ENCODE measurements at regions of chr11 and their contacts with region 1.

Region 1: DNA sequence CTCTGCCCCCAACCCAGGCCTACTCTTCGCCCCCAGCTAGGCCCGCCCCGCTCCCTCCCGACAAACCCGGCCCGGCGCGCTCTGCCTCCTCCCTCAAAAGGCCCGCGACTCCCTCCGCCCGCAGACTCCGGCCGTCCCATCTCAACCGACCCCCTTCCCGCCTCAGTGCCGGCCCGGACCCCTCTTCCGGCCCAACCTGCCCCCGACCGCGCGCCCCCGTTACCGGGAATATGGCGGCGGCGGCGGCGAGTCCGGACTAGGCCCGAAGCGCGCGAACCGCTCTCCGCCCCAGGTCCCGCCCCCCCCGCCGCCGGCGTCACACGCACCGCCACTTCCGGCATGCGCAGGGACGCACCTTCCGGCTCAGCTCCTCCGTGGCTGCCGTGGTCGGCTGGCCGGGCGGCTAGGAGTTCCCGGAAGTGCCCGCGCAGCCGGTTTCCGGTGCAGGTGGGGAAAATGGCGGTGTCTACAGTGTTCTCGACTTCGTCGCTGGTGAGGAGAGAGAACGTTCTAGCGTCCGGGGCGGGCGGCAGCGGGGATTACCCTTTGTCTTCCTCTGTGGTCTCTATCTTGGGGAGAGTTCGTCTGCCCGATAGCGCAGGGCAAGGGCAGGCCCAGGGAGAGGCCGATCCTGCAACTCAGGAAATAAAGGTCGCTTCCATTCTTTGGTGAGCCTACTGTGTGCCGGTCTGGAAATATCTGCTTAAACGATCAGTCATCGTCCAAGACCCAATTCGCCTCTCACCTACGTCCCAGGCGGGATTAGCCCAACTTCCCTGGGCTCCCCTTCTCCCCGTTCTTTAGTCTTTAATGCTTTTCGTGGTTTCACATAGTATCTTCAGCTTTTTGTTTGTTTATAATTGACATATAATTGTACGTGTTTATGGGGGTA is at the starts of genes CPSF7 and SDHAF2:
- DNase-seq: peak; percentile 97 to 98 (median 97)
- H3K4me3 ChIP-seq: peak within 1 kb of the TSS; percentile 93
- H3K4me3 Mint-ChIP-seq: peak within 1 kb of the TSS; percentile 91 to 100 (median 97)
- H3K27ac ChIP-seq: peak within 1 kb of the TSS; percentile 97
- H3K27ac Mint-ChIP-seq: peak within 1 kb of the TSS; percentile 97 to 100 (median 99)
- H3K4me1 ChIP-seq: peaks cover 52% of the 10 kb centered on the region
- H3K4me1 Mint-ChIP-seq: peaks cover 58 to 81% (median 77%) of the 10 kb centered on the region in 3 donors
- H3K27me3 ChIP-seq: no peaks in the 10 kb centered on the region
- H3K27me3 Mint-ChIP-seq: peaks cover 0 to 7% of the 10 kb centered on the region in 2 donors
- total RNA-seq, gene CPSF7: 128 to 140 TPM
- total RNA-seq, gene SDHAF2: 48.8 to 49.2 TPM

Region 2: GRCh38 chr11:61266602-61267001 is 163.3 kb before region 1 on chr11:
- CTCF ChIA-PET with region 1: no interaction called
- POLR2A ChIA-PET with region 1: no interaction called
- DNase-seq: no peak
- H3K4me3 ChIP-seq: no peak overlapping the region
- H3K4me3 Mint-ChIP-seq: no peak overlapping the region
- H3K27ac ChIP-seq: no peak overlapping the region
- H3K27ac Mint-ChIP-seq: no peak overlapping the region
- H3K4me1 ChIP-seq: no peaks in the 10 kb centered on the region
- H3K4me1 Mint-ChIP-seq: no peaks in the 10 kb centered on the region
- H3K27me3 ChIP-seq: no peaks in the 10 kb centered on the region
- H3K27me3 Mint-ChIP-seq: no peaks in the 10 kb centered on the region

Region 3: DNA sequence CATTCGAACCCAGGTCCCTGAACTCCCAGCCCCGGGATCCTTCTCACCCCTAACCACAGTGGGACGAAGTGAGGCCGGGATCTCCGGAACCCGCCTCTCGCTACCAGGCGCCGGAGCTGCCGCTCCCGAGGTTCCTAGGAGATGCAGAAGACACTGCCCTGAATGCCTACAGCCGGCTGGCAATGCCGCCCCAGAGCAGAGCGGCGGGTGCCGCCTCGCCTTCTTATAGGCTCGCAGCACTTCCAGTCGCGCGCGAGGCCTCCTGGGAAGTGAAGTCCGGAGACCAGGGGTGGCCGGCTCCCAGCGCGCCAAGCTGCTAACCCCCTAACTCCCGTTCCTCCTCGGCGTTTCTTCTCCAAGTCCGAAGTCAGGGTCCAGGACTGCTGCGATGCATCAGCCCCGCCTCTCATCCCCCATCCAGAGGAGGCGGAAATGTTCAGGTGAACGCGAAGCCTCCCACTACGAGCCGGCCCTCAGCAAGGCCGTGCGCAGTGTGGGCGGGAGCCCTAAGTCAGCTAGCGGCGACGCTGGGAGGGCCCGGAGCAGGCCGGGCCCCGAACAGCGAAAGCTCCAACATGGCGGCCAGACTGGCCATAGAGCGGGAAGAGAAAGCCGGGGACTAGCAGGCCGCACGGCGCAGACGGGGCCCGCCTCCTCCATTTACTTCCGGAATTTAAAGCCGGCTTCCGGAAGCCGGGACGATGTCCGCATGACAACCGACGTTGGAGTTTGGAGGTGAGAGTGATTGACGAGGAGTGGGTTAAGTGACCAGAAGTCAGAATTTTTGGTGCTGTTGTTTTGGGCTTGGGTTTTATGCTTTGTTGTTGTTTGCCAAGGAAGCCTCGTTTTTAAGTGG is 68.0 kb before region 1 on chr11 and contains the starts of genes CYB561A3 and TMEM138:
- CTCF ChIA-PET with region 1: interaction called, 4 read pairs
- POLR2A ChIA-PET with region 1: interaction called, 27 read pairs
- DNase-seq: peak; percentile 79 to 92 (median 84)
- H3K4me3 ChIP-seq: peak within 1 kb of the TSS; percentile 91
- H3K4me3 Mint-ChIP-seq: peak within 1 kb of the TSS; percentile 95 to 99 (median 96)
- H3K27ac ChIP-seq: peak within 1 kb of the TSS; percentile 88
- H3K27ac Mint-ChIP-seq: peak within 1 kb of the TSS; percentile 91 to 100 (median 98)
- H3K4me1 ChIP-seq: peaks cover 29% of the 10 kb centered on the region
- H3K4me1 Mint-ChIP-seq: peaks cover 29 to 44% (median 39%) of the 10 kb centered on the region in 3 donors
- H3K27me3 ChIP-seq: no peaks in the 10 kb centered on the region
- H3K27me3 Mint-ChIP-seq: no peaks in the 10 kb centered on the region
- total RNA-seq, gene CYB561A3: 53.0 to 53.7 TPM
- total RNA-seq, gene TMEM138: 74.4 to 75.1 TPM

Region 4: GRCh38 chr11:61392981-61393595 is 36.8 kb before region 1 on chr11:
- CTCF ChIA-PET with region 1: interaction called, 12 read pairs
- POLR2A ChIA-PET with region 1: interaction called, 20 read pairs
- DNase-seq: peak in 1 of 5 donors; percentile 41
- H3K4me3 ChIP-seq: peak overlapping the region; percentile 76
- H3K4me3 Mint-ChIP-seq: peak overlapping the region; percentile 91 to 97 (median 95)
- H3K27ac ChIP-seq: peak overlapping the region; percentile 67
- H3K27ac Mint-ChIP-seq: peak overlapping the region; percentile 92 to 100 (median 98)
- H3K4me1 ChIP-seq: peaks cover 21% of the 10 kb centered on the region
- H3K4me1 Mint-ChIP-seq: peaks cover 19 to 30% (median 23%) of the 10 kb centered on the region in 3 donors
- H3K27me3 ChIP-seq: no peaks in the 10 kb centered on the region
- H3K27me3 Mint-ChIP-seq: no peaks in the 10 kb centered on the region

Region 5: GRCh38 chr11:61446211-61446651 is 16.3 kb after region 1 on chr11:
- CTCF ChIA-PET with region 1: interaction called, 13 read pairs
- POLR2A ChIA-PET with region 1: no interaction called
- DNase-seq: peak; percentile 20 to 62 (median 33)
- H3K4me3 ChIP-seq: no peak overlapping the region
- H3K4me3 Mint-ChIP-seq: no peak overlapping the region
- H3K27ac ChIP-seq: no peak overlapping the region
- H3K27ac Mint-ChIP-seq: peak overlapping the region in 2 of 8 donors; percentile 47 to 81
- H3K4me1 ChIP-seq: no peaks in the 10 kb centered on the region
- H3K4me1 Mint-ChIP-seq: peaks cover 24 to 25% (median 25%) of the 10 kb centered on the region in 3 donors
- H3K27me3 ChIP-seq: no peaks in the 10 kb centered on the region
- H3K27me3 Mint-ChIP-seq: no peaks in the 10 kb centered on the region

Region 6: DNA sequence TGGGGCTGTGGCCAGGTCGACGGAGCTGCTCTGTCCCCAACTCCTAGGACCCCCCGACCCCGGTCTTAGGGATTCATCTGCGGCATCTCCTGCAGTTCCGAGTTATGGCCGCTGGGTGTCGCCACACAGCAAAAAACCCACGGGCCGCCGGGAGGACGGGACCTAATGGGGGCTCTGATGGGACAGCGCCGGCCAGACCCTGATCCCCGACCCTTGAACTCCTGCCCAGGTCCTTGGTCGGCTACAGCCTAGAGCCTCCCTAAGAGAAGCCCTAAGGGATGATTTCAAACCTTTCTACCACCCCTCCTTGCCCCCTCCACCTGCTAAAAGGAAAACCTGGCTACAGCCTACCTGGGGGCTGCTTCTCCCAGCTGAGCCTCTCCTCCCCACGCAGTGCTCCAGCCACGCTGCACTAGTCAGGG is 47.8 kb after region 1 on chr11:
- CTCF ChIA-PET with region 1: no interaction called
- POLR2A ChIA-PET with region 1: no interaction called
- DNase-seq: peak; percentile 19 to 65 (median 42)
- H3K4me3 ChIP-seq: no peak overlapping the region
- H3K4me3 Mint-ChIP-seq: peak overlapping the region in 1 of 7 donors; percentile 40
- H3K27ac ChIP-seq: no peak overlapping the region
- H3K27ac Mint-ChIP-seq: no peak overlapping the region
- H3K4me1 ChIP-seq: peaks cover 8% of the 10 kb centered on the region
- H3K4me1 Mint-ChIP-seq: peaks cover 6 to 9% (median 6%) of the 10 kb centered on the region in 3 donors
- H3K27me3 ChIP-seq: no peaks in the 10 kb centered on the region
- H3K27me3 Mint-ChIP-seq: peaks cover 0 to 9% of the 10 kb centered on the region in 2 donors

Measured in CD8-positive, alpha-beta memory T cell (primary cell).